Caco-2 (cell line): ENCODE measurements at regions of chr5 and their contacts with region 1.

Region 1: DNA sequence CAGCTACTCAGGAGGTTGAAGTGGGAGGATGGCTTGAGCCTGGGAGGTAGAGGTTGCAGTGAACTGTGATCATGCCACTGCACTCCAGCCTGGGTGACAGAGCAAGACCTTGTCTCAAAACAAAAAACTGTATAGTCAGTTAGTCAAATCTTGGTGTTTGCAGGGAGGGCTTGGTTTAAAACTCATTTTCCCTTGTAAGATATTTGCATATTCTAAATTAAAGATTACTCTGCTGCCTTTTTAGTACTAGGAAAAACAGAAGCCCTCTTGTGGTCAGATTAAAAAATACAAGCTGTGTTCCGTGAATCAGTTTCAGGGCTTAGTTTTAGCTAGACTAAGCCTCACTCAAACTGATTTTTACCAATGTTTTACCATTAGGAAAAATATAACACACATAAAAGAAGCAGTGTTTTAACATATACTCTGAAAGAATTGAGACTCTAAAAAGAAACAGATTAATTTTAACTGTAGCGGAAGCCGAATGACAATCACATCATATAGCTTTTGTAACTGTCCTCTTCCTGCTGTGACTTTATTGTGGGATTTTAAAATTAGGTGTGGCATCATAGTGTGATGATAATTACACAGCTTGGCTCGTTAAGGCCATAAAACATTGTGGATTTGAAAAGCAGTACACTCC is 84.9 kb upstream of the BASP1 start:
- DNase-seq: peak in 1 of 2 experiments; percentile 45
- H3K4me3 ChIP-seq: no peak overlapping the region
- H3K4me3 Mint-ChIP-seq: no peak overlapping the region
- H3K27ac Mint-ChIP-seq: no peak overlapping the region
- H3K4me1 ChIP-seq: no peaks in the 10 kb centered on the region
- H3K4me1 Mint-ChIP-seq: peaks cover 9% of the 10 kb centered on the region
- H3K27me3 ChIP-seq: no peaks in the 10 kb centered on the region
- H3K27me3 Mint-ChIP-seq: no peaks in the 10 kb centered on the region
- CTCF ChIP-seq: peak; percentile 49 to 76

Region 2: DNA sequence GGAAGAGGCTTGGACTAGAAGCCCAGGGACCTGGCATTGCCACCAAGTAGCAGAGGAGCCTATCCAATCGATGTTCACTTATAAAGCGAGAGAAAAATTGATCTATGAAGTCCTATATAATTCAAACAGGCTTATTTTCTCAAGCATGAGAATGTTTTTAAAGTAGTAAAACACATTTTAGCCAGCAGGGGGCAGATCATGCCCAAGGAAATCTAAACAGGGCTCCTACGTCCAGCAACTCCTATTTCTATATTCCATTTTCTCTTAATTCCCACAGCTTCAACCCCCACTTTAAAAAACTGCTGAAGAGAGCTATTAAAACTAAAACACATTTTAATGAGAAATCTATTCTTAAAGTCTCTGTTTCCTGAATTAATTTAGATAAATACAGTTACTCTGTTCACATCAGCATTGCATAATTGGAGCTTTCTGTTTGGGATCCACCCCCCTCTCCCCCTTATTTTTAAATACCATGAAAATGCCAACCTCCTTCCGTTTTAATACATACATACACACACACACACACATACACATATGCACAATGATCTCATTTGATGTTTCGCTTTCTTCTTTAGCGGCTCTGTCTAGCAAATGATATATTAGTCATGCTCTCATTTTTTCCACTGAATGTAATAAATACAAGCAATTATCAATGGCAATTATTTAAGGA is 341.4 kb before region 1 on chr5:
- CTCF ChIA-PET with region 1: interaction called, 5 read pairs
- POLR2A ChIA-PET with region 1: no interaction called
- intact Hi-C with region 1: loop called (anchors 1 kb)
- DNase-seq: peak in 1 of 2 experiments; percentile 63
- H3K4me3 ChIP-seq: no peak overlapping the region
- H3K4me3 Mint-ChIP-seq: no peak overlapping the region
- H3K27ac Mint-ChIP-seq: no peak overlapping the region
- H3K4me1 ChIP-seq: no peaks in the 10 kb centered on the region
- H3K4me1 Mint-ChIP-seq: no peaks in the 10 kb centered on the region
- H3K27me3 ChIP-seq: no peaks in the 10 kb centered on the region; the same call in 1 of the 2 replicates
- H3K27me3 Mint-ChIP-seq: no peaks in the 10 kb centered on the region
- CTCF ChIP-seq: peak; percentile 65 to 73

Region 3: GRCh38 chr5:17079562-17079961 is 53.0 kb before region 1 on chr5:
- CTCF ChIA-PET with region 1: interaction called, 6 read pairs
- POLR2A ChIA-PET with region 1: interaction called, 4 read pairs
- intact Hi-C with region 1: loop called (anchors 5 kb)
- DNase-seq: no peak
- H3K4me3 ChIP-seq: no peak overlapping the region
- H3K4me3 Mint-ChIP-seq: no peak overlapping the region
- H3K27ac Mint-ChIP-seq: no peak overlapping the region
- H3K4me1 ChIP-seq: peaks cover 32% of the 10 kb centered on the region
- H3K4me1 Mint-ChIP-seq: peaks cover 34% of the 10 kb centered on the region
- H3K27me3 ChIP-seq: no peaks in the 10 kb centered on the region
- H3K27me3 Mint-ChIP-seq: no peaks in the 10 kb centered on the region
- CTCF ChIP-seq: no peak

Region 4: GRCh38 chr5:17182981-17183380 is 50.4 kb after region 1 on chr5:
- CTCF ChIA-PET with region 1: no interaction called
- POLR2A ChIA-PET with region 1: no interaction called
- intact Hi-C with region 1: no loop called
- DNase-seq: no peak
- H3K4me3 ChIP-seq: no peak overlapping the region
- H3K4me3 Mint-ChIP-seq: no peak overlapping the region
- H3K27ac Mint-ChIP-seq: no peak overlapping the region
- H3K4me1 ChIP-seq: peaks cover 37% of the 10 kb centered on the region
- H3K4me1 Mint-ChIP-seq: peaks cover 39% of the 10 kb centered on the region
- H3K27me3 ChIP-seq: no peaks in the 10 kb centered on the region
- H3K27me3 Mint-ChIP-seq: no peaks in the 10 kb centered on the region
- CTCF ChIP-seq: no peak